ENCODE measurements at regions of chr1 and their contacts with region 1.

Region 1: DNA sequence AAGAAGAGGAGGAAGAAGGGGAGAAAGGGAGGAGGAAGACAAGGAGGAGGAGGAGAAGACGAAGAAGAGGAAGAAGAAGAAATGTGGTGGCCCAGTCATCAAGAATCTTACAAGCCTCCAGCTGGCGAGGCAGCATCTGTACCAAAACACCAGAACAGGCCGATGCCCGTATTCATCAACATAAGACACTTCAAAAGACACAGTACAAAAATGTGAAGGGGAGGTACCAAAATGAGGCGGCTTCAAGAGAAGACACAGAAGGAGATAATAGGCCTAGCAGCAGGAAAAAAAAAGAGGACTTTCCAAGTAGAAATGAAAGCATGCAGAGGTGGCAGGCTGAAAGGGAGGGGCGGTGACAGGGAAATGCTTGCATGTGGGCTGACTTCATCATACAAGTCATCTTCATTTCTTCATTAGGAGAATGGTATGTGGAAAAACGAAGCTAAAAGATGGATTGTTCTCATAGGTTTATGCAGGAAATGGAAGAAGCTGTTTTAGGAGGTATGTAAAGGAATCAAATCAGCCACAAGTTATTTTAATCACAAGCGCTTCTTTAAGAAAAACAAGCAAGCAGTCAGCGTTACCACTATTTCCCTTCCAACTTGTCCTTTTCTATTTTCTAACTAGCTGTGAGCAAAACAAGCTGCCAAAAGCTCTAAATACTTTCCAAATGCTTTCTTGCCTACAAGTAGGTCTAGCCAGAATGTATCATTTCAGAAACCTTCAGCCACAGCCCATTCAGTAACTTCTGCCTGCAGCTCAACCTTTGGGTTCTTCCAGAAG is 192.3 kb downstream of the SLC45A1 start:
- DNase-seq: peak in 9 of 10 donors; percentile 27 to 70 (median 53)
- ATAC-seq: peak; percentile 93 to 96
- H3K4me3 Mint-ChIP-seq: peak overlapping the region; percentile 61 to 85 (median 73)
- H3K27ac Mint-ChIP-seq: peak overlapping the region; percentile 89 to 97 (median 94)
- H3K4me1 Mint-ChIP-seq: peaks cover 17 to 51% (median 44%) of the 10 kb centered on the region in 4 donors
- H3K27me3 Mint-ChIP-seq: no peaks in the 10 kb centered on the region

Region 2: GRCh38 chr1:8525558-8526275 is 15.5 kb after region 1 on chr1:
- POLR2A ChIA-PET with region 1: interaction called, 28 read pairs
- DNase-seq: peak; percentile 37 to 87 (median 74)
- ATAC-seq: peak; percentile 93 to 96
- H3K4me3 Mint-ChIP-seq: no peak overlapping the region
- H3K27ac Mint-ChIP-seq: no peak overlapping the region
- H3K4me1 Mint-ChIP-seq: peaks cover 21 to 50% (median 25%) of the 10 kb centered on the region in 4 donors
- H3K27me3 Mint-ChIP-seq: no peaks in the 10 kb centered on the region

Measured in naive thymus-derived CD8-positive, alpha-beta T cell (primary cell).